Left cardiac atrium (tissue), 4 donors: ENCODE measurements at regions of chr5 and their contacts with region 1.

Region 1: DNA sequence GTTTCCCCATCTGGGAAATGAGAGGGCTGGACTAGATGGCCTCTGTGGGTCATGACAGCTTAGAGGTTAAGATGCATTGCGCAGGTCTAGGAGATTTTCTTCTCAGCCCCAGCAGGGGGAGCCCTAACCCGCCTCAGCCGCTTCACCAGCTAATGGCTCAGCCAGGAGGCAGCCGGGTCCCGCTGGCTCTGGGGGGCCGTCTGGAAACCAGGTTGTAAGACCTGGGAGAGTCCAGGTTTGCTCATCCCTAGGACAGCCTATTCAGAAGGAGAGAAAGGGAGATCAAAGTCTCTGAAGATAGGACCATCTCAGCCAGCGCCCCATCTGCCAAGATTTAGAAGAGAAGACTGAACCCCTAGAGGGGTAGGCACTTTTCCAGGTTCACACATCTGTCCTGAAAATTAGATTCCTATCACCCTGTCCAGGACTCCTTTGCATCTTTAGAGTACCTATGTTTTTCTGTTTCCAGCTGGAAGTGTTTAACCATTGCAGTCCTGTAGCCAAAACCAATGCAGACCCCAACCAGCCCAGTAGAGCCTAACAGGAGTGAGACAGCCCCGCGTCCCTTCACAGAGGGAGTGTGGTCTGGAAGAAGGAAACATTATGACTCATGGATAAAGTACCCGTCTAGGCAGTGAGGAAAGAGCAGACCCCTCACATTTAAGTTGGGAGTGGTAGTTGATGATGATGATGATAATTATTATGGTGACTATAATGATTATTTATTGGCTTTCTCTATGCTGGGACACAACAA is 27.5 kb downstream of the SPARC start:
- DNase-seq: peak; percentile 84
- ATAC-seq: peak; percentile 80 to 83

Region 2: GRCh38 chr5:151384106-151384505 is 275.1 kb before region 1 on chr5:
- intact Hi-C with region 1: no loop called
- DNase-seq: no peak
- ATAC-seq: peak in 1 of 2 donors; percentile 90

Region 3: GRCh38 chr5:151406322-151406947 is 252.7 kb before region 1 on chr5:
- intact Hi-C with region 1: no loop called
- DNase-seq: no peak
- ATAC-seq: no peak

Region 4: DNA sequence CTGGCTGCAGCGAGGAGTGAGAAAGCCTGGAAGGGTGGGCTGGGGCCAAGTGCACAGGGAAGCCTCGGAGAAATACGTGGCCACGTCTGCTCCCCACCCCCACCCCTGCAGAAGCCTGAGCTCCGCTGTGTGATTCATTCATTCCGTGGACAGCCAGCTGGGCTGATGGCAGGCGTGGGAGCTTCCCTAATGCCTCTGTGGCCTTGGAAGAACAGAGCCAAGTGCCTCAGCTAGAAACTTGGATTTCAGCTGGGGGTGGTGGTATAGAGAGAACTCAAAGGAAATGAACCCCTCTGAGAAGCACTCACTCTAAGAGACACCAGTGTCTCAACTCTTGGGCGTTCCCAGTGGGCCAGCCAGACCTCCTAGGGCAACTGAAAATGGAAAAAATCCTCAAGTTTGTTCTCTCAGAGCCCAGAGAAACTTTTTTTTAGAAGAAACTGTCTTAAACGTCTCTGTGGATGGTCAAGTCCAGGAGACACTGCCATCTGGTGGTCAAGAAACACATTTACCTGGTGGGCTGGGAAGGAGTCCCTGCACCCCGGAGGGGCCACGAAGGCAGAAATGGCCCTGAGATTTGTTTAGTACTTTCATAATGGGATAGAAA is 81.3 kb after region 1 on chr5:
- intact Hi-C with region 1: loop called (anchors 1 to 2 kb)
- DNase-seq: peak; percentile 73
- ATAC-seq: peak; percentile 70 to 88

Region 5: DNA sequence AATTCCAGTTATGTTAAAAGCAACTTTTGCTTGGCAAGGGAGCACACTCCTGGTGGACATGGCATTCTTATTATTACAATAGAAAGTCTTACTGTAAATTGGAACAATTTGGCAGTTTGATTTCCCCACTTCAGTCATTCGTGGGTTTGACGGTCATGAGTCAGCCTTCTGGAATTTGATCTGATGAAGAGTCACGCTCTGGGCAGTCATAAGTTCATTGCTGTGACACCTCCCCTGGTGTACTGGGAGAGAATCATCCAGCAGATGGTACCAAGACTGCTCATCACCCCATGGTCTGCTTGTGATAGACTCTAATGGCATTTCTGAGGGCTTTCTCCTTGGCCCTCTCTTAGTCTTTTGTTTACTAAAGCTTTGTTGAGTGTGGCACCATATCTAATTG is 211.6 kb after region 1 on chr5:
- intact Hi-C with region 1: no loop called
- DNase-seq: no peak
- ATAC-seq: peak in 1 of 2 donors; percentile 67

Region 6: DNA sequence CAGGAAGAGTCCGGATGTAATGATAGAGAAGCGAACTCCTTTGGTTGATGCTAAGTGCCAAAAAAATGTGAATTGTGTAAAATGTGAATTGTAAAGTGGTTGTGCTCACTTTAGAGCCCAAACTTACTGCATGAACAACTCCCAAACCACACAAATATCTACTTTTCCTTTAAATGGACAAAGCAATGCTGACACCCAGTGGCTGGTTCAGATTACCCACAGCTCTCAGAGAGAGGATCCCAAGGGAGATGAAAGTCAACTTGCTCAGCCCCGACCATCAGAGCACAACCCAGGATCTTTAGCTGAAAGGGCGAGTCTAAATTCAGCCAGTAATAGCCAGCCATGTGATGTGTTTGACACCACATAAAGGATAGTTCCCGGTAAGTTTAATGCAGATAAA is 612.2 kb after region 1 on chr5:
- intact Hi-C with region 1: loop called in 1 of 2 experiments (anchors 10 kb)
- DNase-seq: no peak
- ATAC-seq: peak; percentile 63 to 76